CD4-positive, alpha-beta memory T cell (primary cell): ENCODE measurements at regions of chr12 and their contacts with region 1.

Region 1: GRCh38 chr12:95532851-95533250 is 18.4 kb downstream of the USP44 start:
- DNase-seq: no peak
- H3K4me3 ChIP-seq: no peak overlapping the region
- H3K4me3 Mint-ChIP-seq: no peak overlapping the region
- H3K27ac ChIP-seq: no peak overlapping the region
- H3K27ac Mint-ChIP-seq: no peak overlapping the region
- H3K4me1 ChIP-seq: no peaks in the 10 kb centered on the region
- H3K4me1 Mint-ChIP-seq: peaks cover 0 to 2% (median under 1%) of the 10 kb centered on the region in 4 donors
- H3K27me3 ChIP-seq: no peaks in the 10 kb centered on the region
- H3K27me3 Mint-ChIP-seq: no peaks in the 10 kb centered on the region

Region 2: DNA sequence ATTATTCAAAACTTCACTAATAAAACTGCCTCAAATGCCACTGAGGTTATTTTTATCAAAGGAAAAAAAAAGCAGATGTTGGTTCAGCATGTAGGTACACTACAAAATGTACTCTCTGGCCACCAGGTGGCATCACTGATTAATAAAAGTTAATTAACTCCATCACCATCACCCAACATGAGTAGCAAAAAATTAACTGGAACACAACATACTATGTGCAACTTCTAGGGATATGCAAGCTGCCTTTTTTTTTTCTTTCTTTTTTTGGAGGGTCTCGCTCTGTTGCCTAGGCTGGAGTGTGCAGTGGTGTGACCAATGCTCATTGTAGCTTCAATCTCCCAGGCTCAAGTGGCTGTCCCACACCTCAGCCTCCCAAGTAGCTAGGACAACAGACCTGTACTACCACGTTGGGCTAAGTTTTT is 415.7 kb before region 1 on chr12:
- CTCF ChIA-PET with region 1: interaction called, 240 read pairs
- POLR2A ChIA-PET with region 1: interaction called, 3 read pairs
- intact Hi-C with region 1: loop called (anchors 1 kb)
- DNase-seq: peak; percentile 63 to 72 (median 66)
- H3K4me3 ChIP-seq: no peak overlapping the region
- H3K4me3 Mint-ChIP-seq: no peak overlapping the region
- H3K27ac ChIP-seq: no peak overlapping the region
- H3K27ac Mint-ChIP-seq: no peak overlapping the region
- H3K4me1 ChIP-seq: no peaks in the 10 kb centered on the region
- H3K4me1 Mint-ChIP-seq: no peaks in the 10 kb centered on the region
- H3K27me3 ChIP-seq: no peaks in the 10 kb centered on the region
- H3K27me3 Mint-ChIP-seq: no peaks in the 10 kb centered on the region

Region 3: DNA sequence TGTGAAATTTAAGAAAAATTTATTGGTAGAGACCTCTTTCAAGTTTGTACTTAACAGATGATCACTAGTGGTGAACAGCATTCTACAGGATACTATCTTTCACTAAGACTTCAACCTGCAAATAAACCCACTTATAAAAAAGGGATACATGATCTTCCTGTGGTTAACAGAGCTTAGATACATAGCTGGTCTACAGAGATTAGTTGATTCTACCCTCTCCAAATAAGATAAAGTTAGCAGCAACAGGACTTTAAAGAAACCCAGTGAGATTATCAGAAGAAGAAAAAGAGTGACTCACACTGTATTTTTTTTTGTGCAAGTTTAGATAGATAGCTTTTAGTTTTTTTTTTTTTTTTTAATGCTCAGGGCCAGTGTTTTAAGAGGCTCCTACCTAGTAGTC is 16.1 kb before region 1 on chr12:
- CTCF ChIA-PET with region 1: interaction called, 16 read pairs
- POLR2A ChIA-PET with region 1: no interaction called
- intact Hi-C with region 1: no loop called
- DNase-seq: no peak
- H3K4me3 ChIP-seq: no peak overlapping the region
- H3K4me3 Mint-ChIP-seq: no peak overlapping the region
- H3K27ac ChIP-seq: no peak overlapping the region
- H3K27ac Mint-ChIP-seq: peak overlapping the region in 1 of 7 donors; percentile 5
- H3K4me1 ChIP-seq: no peaks in the 10 kb centered on the region
- H3K4me1 Mint-ChIP-seq: no peaks in the 10 kb centered on the region
- H3K27me3 ChIP-seq: no peaks in the 10 kb centered on the region
- H3K27me3 Mint-ChIP-seq: no peaks in the 10 kb centered on the region

Region 4: GRCh38 chr12:95548539-95549391 is 15.9 kb after region 1 on chr12:
- CTCF ChIA-PET with region 1: interaction called, 11 read pairs
- POLR2A ChIA-PET with region 1: no interaction called
- intact Hi-C with region 1: no loop called
- DNase-seq: peak; percentile 66 to 73 (median 71)
- H3K4me3 ChIP-seq: peak overlapping the region in 1 of 2 donors; percentile 68
- H3K4me3 Mint-ChIP-seq: peak overlapping the region; percentile 83 to 92 (median 88)
- H3K27ac ChIP-seq: peak overlapping the region; percentile 60
- H3K27ac Mint-ChIP-seq: peak overlapping the region; percentile 45 to 93 (median 85)
- H3K4me1 ChIP-seq: peaks cover 13% of the 10 kb centered on the region
- H3K4me1 Mint-ChIP-seq: peaks cover 14 to 60% (median 27%) of the 10 kb centered on the region in 4 donors
- H3K27me3 ChIP-seq: no peaks in the 10 kb centered on the region
- H3K27me3 Mint-ChIP-seq: peaks cover 6 to 17% of the 10 kb centered on the region in 2 donors

Region 5: DNA sequence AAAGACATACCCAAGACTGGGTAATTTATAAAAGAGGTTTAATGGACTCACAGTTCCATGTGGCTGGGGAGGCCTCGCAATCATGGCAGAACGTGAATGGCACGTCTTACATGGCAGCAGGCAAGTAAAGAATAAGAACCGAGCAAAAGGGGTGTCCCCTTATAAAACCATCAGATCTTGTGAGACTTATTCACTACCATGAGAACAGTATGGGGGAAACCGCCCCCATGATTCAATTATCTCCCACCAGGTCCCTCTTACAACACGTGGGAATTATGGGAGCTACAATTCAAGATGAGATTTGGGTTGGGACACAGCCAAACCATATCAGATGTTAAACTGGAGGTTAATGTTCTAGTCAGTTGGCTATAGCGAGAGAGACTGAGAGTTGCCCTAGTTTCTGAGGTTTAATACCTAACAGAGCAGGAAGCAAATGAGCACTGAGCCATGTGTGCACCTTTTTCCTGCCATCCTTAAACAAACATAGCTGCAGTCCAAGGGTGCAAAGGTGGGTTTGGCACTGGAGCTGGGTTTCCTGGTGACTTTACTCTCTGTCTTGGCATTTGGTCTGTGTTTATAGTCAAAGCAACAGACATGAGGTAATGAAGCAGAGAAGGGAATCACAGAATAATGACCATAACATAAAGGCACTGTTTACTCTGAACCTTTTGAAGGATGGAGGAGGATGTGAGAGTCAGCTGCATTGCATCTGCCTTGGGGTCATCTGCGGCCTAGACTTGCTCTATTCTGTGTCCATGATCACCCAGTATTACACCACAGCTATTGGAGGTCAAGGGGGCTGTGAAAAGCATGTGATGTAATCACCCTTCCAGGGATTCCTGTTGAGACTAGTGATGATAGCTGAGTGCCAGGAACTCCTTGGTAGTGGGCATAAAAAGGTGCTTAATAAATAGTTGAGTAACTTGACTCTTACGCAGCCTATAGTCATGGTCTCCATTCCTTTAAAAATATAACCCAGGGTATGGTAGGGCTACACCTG is 102.1 kb after region 1 on chr12:
- CTCF ChIA-PET with region 1: no interaction called
- POLR2A ChIA-PET with region 1: no interaction called
- intact Hi-C with region 1: no loop called
- DNase-seq: no peak
- H3K4me3 ChIP-seq: no peak overlapping the region
- H3K4me3 Mint-ChIP-seq: no peak overlapping the region
- H3K27ac ChIP-seq: no peak overlapping the region
- H3K27ac Mint-ChIP-seq: no peak overlapping the region
- H3K4me1 ChIP-seq: no peaks in the 10 kb centered on the region
- H3K4me1 Mint-ChIP-seq: no peaks in the 10 kb centered on the region
- H3K27me3 ChIP-seq: no peaks in the 10 kb centered on the region
- H3K27me3 Mint-ChIP-seq: peaks cover 1 to 2% of the 10 kb centered on the region in 2 donors

Region 6: GRCh38 chr12:95683418-95683817 is 150.6 kb after region 1 on chr12:
- CTCF ChIA-PET with region 1: no interaction called
- POLR2A ChIA-PET with region 1: no interaction called
- intact Hi-C with region 1: no loop called
- DNase-seq: no peak
- H3K4me3 ChIP-seq: no peak overlapping the region
- H3K4me3 Mint-ChIP-seq: no peak overlapping the region
- H3K27ac ChIP-seq: no peak overlapping the region
- H3K27ac Mint-ChIP-seq: no peak overlapping the region
- H3K4me1 ChIP-seq: no peaks in the 10 kb centered on the region
- H3K4me1 Mint-ChIP-seq: no peaks in the 10 kb centered on the region
- H3K27me3 ChIP-seq: no peaks in the 10 kb centered on the region
- H3K27me3 Mint-ChIP-seq: peaks cover 5 to 6% of the 10 kb centered on the region in 2 donors